ENCODE measurements at regions of chr12 and their contacts with region 1.

Region 1: GRCh38 chr12:9741726-9742125 is 8.8 kb upstream of the CLECL1 start:
- DNase-seq: peak; percentile 89
- H3K4me3 Mint-ChIP-seq: peak overlapping the region; percentile 79
- H3K27ac Mint-ChIP-seq: peak overlapping the region; percentile 98
- H3K4me1 Mint-ChIP-seq: peaks cover 71% of the 10 kb centered on the region
- H3K27me3 Mint-ChIP-seq: no peaks in the 10 kb centered on the region

Region 2: GRCh38 chr12:9615420-9616136 is 126.1 kb before region 1 on chr12:
- CTCF ChIA-PET with region 1: interaction called, 3 read pairs
- POLR2A ChIA-PET with region 1: interaction called, 21 read pairs
- DNase-seq: peak; percentile 23
- H3K4me3 Mint-ChIP-seq: peak overlapping the region; percentile 65
- H3K27ac Mint-ChIP-seq: peak overlapping the region; percentile 94
- H3K4me1 Mint-ChIP-seq: peaks cover 66% of the 10 kb centered on the region
- H3K27me3 Mint-ChIP-seq: no peaks in the 10 kb centered on the region

Region 3: DNA sequence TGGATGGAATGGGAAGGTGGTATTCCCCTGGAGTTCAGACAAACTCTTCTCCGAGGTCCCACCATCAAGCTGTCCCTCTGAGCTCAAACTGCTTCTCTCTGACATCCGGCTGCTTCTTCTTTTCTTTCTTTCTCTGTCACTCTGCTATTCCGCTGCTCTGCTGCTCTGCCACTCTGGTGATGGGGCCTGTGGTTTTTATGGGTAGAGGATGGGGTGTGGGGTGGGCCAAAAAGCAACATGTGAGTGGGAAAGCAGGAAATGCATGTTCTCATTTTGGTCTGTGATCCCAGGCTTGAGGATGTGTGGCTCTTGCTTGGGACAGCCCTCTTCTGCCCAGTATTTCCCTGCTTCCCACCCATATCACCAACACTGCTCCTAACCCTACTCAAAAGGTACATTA is 39.5 kb before region 1 on chr12:
- CTCF ChIA-PET with region 1: interaction called, 7 read pairs
- POLR2A ChIA-PET with region 1: interaction called, 21 read pairs
- DNase-seq: peak; percentile 75
- H3K4me3 Mint-ChIP-seq: peak overlapping the region; percentile 43
- H3K27ac Mint-ChIP-seq: peak overlapping the region; percentile 85
- H3K4me1 Mint-ChIP-seq: peaks cover 72% of the 10 kb centered on the region
- H3K27me3 Mint-ChIP-seq: no peaks in the 10 kb centered on the region

Region 4: GRCh38 chr12:9760699-9761418 is 19.1 kb after region 1 on chr12 and contains the start of gene CD69:
- CTCF ChIA-PET with region 1: interaction called, 93 read pairs
- POLR2A ChIA-PET with region 1: interaction called, 243 read pairs
- DNase-seq: peak; percentile 88
- H3K4me3 Mint-ChIP-seq: peak within 1 kb of the TSS; percentile 99
- H3K27ac Mint-ChIP-seq: peak within 1 kb of the TSS; percentile 86
- H3K4me1 Mint-ChIP-seq: peaks cover 53% of the 10 kb centered on the region
- H3K27me3 Mint-ChIP-seq: no peaks in the 10 kb centered on the region
- total RNA-seq, gene CD69: 196 to 197 TPM

Region 5: GRCh38 chr12:9869307-9870161 is 127.8 kb after region 1 on chr12 and contains the start of gene CLEC2B:
- CTCF ChIA-PET with region 1: interaction called, 9 read pairs
- POLR2A ChIA-PET with region 1: interaction called, 31 read pairs
- DNase-seq: no peak
- H3K4me3 Mint-ChIP-seq: peak within 1 kb of the TSS; percentile 85
- H3K27ac Mint-ChIP-seq: peak within 1 kb of the TSS; percentile 92
- H3K4me1 Mint-ChIP-seq: peaks cover 19% of the 10 kb centered on the region
- H3K27me3 Mint-ChIP-seq: no peaks in the 10 kb centered on the region
- total RNA-seq, gene CLEC2B: 79.6 to 79.7 TPM

Region 6: DNA sequence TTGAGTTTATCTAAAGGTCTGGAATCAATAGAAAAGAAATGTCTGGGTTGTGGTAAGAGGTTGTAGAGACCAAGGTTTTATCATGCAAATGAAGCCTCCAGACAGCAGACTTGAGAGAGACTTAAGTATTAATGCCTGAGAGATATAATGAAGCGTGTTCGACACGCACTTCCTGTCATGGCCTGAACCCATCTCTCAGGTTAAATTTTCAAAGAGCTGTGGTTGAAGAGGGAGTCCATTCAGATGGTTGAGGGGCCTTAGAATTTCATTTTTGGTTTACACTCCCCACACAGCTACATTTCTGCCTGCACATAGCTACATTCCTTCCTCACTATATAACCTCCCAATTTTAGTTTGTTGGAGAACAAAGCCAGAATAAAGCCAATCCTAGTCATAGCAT is 219.4 kb after region 1 on chr12:
- CTCF ChIA-PET with region 1: no interaction called
- POLR2A ChIA-PET with region 1: no interaction called
- DNase-seq: no peak
- H3K4me3 Mint-ChIP-seq: no peak overlapping the region
- H3K27ac Mint-ChIP-seq: no peak overlapping the region
- H3K4me1 Mint-ChIP-seq: peaks cover 33% of the 10 kb centered on the region
- H3K27me3 Mint-ChIP-seq: no peaks in the 10 kb centered on the region

Region 7: GRCh38 chr12:10052193-10052913 is 310.6 kb after region 1 on chr12:
- CTCF ChIA-PET with region 1: no interaction called
- POLR2A ChIA-PET with region 1: no interaction called
- DNase-seq: no peak
- H3K4me3 Mint-ChIP-seq: no peak overlapping the region
- H3K27ac Mint-ChIP-seq: no peak overlapping the region
- H3K4me1 Mint-ChIP-seq: peaks cover 12% of the 10 kb centered on the region
- H3K27me3 Mint-ChIP-seq: peaks cover 40% of the 10 kb centered on the region

Region 8: GRCh38 chr12:10153271-10154144 is 411.8 kb after region 1 on chr12:
- CTCF ChIA-PET with region 1: no interaction called
- POLR2A ChIA-PET with region 1: no interaction called
- DNase-seq: peak; percentile 57
- H3K4me3 Mint-ChIP-seq: peak overlapping the region; percentile 76
- H3K27ac Mint-ChIP-seq: no peak overlapping the region
- H3K4me1 Mint-ChIP-seq: peaks cover 12% of the 10 kb centered on the region
- H3K27me3 Mint-ChIP-seq: peaks cover 41% of the 10 kb centered on the region

Measured in activated CD4-positive, alpha-beta memory T cell treated with anti-CD3 and anti-CD28 coated beads, Interleukin-2, amount 10 ng/mL, durations not matched to agents 7 days and 5 days (primary cell).